PC-9 (cell line): ENCODE measurements at regions of chr7 and their contacts with region 1.

Region 1: DNA sequence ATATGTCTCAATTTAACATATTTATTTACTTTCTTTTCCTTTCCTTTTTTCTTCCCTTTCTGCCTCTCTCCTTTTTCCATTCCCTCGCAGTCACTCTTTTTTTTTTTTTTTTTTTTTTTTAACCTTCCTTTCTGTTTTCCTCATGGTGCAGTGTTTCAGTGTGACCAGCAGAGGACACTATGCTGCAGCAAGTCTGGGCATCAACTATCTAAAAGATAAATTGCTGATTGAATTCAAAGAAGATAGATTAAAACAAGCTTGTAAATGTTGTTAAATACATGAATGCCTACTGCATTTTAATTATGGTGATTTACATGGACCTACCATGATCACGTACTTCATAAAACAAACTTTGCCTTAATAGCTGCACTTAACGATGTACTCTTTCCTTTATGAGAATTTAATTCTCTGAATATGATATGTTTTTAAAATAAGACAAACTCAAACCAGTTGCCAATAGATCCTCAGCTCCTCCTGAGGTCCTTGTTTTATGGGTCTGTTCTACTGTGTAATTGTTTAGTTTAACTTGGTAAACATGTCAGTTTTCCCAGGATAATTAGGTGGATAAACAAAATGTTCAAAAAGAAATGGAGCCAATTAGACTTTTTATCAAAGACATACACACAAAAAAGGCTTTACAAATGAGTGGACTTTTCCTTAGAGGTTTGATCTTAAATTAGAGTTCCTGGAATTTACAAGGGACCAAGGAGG is 101.0 kb upstream of the AGR3 start:
- DNase-seq: peak; percentile 31 to 66
- H3K4me3 ChIP-seq: no peak overlapping the region
- H3K27ac ChIP-seq: peak overlapping the region; percentile 5; the same call in 1 of the 2 replicates
- H3K4me1 ChIP-seq: peaks cover 61% of the 10 kb centered on the region
- H3K27me3 ChIP-seq: no peaks in the 10 kb centered on the region
- CTCF ChIP-seq: peak; percentile 99

Region 2: GRCh38 chr7:16801111-16801542 is 181.7 kb before region 1 on chr7:
- CTCF ChIA-PET with region 1: interaction called, 15 read pairs
- POLR2A ChIA-PET with region 1: no interaction called
- intact Hi-C with region 1: loop called (anchors 1 kb)
- DNase-seq: peak; percentile 15 to 79
- H3K4me3 ChIP-seq: no peak overlapping the region
- H3K27ac ChIP-seq: no peak overlapping the region
- H3K4me1 ChIP-seq: peaks cover 50% of the 10 kb centered on the region
- H3K27me3 ChIP-seq: no peaks in the 10 kb centered on the region
- CTCF ChIP-seq: peak; percentile 85

Region 3: GRCh38 chr7:16918288-16918895 is 64.4 kb before region 1 on chr7:
- CTCF ChIA-PET with region 1: no interaction called
- POLR2A ChIA-PET with region 1: interaction called, 3 read pairs
- intact Hi-C with region 1: loop called (anchors 2 kb)
- DNase-seq: peak in 1 of 2 experiments; percentile 45
- H3K4me3 ChIP-seq: no peak overlapping the region
- H3K27ac ChIP-seq: no peak overlapping the region
- H3K4me1 ChIP-seq: peaks cover 86% of the 10 kb centered on the region
- H3K27me3 ChIP-seq: no peaks in the 10 kb centered on the region
- CTCF ChIP-seq: peak; percentile 96

Region 4: DNA sequence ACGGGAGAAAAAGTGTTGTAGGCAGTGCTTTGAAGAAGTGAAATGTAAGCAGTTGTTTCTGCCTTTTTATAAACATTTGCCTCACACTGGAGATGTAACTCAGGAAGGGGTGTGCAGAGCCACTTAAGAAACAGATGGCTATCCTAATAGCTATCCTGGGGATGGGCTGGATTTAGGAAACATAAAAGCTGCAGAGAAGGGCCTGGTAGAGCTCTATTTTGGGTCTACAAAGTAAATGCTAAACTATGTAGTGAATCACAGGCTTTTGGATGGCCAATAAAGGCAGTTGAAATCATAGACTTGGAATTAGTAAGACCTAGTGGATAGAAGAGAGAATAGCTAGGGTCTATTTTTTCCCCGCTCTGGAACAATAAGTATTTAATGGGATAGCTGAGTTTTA is 21.2 kb before region 1 on chr7:
- CTCF ChIA-PET with region 1: no interaction called
- POLR2A ChIA-PET with region 1: no interaction called
- intact Hi-C with region 1: no loop called
- DNase-seq: no peak
- H3K4me3 ChIP-seq: no peak overlapping the region
- H3K27ac ChIP-seq: no peak overlapping the region
- H3K4me1 ChIP-seq: no peaks in the 10 kb centered on the region
- H3K27me3 ChIP-seq: no peaks in the 10 kb centered on the region
- CTCF ChIP-seq: no peak

Region 5: DNA sequence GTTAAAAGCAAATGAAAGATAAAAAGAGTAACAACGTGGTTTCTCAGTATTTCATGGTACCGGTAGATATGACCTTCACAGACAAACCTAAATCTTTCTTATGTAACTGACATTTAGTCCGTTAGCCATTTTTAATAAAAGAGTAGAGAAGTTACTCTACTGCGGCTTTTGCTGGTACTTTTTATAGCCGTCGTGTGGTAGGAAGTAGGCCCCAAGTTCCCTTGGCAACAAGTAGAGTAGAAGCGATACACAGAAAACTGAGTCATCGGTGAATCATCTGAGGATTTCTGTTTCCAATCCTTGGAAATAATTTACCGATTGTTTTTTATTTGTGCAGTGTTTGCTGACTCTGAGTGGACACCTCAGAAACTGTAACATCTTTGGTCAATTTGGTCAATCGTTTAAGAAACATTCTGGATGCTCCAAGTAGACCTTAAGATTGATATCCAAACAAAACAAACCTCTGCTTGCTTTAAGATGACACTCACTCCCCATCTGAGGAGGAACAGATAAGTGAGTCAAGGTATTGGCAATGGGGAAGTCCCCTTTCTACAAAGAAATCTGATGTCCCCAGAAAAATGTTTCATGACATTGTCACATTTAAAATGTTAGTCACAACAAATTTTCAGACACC is 251.7 kb after region 1 on chr7:
- CTCF ChIA-PET with region 1: no interaction called
- POLR2A ChIA-PET with region 1: no interaction called
- intact Hi-C with region 1: loop called (anchors 2 kb)
- DNase-seq: peak; percentile 56 to 97
- H3K4me3 ChIP-seq: peak overlapping the region; percentile 21; the same call in 1 of the 2 replicates
- H3K27ac ChIP-seq: peak overlapping the region; percentile 67
- H3K4me1 ChIP-seq: peaks cover 32% of the 10 kb centered on the region
- H3K27me3 ChIP-seq: no peaks in the 10 kb centered on the region
- CTCF ChIP-seq: no peak

Region 6: DNA sequence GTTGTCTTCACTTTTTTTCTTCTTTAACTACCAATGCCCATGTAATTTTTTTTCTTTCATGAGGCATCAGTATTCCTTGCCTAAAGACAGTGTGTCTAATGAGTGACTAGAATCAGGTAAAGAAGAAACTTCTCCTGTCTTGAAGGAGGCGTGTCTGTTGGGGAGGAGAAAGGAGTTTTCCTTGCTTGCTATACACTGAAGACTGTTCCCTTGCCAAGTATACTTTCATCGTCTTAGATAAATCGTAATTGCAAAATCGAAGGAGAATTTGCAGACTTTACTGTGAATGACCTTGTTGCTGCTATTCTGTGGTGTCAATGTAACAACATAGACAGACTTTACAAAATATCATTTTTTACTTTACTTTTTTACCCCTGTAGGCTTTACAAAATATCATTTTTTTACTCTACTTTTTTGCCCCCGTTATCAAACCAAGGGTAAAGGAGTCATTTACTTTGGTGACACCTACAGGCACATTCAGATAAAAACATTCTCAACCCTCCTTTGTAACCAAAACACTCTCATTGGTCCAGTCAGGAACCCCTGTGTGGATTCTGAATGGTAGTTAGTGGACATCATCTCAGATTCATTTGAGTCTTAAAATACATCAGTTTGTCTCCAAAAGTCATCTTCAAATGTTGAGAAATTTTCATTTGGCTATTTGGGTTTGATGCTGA is 548.1 kb after region 1 on chr7:
- CTCF ChIA-PET with region 1: interaction called, 3 read pairs
- POLR2A ChIA-PET with region 1: no interaction called
- intact Hi-C with region 1: loop called (anchors 5 kb)
- DNase-seq: no peak
- H3K4me3 ChIP-seq: no peak overlapping the region
- H3K27ac ChIP-seq: no peak overlapping the region
- H3K4me1 ChIP-seq: peaks cover 20% of the 10 kb centered on the region
- H3K27me3 ChIP-seq: no peaks in the 10 kb centered on the region
- CTCF ChIP-seq: no peak

Region 7: DNA sequence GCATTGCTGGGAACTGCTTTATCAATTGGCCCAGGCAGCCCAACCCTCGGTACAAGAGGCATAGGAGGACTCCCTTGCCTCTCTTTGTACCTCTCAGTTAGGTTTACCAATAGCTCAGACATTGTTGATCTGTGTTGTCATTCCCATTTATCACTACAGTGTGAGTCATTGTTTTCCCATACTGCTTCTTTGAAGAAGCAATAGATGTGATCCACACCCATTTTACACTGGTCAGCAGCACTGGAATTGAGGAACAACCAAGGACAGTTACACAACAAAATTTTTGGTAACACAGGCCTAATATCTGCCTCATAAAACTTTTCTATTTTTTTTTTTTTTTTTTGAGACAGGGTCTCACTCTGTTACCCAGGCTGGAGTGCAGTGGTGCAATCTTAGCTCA is 650.3 kb after region 1 on chr7:
- CTCF ChIA-PET with region 1: no interaction called
- POLR2A ChIA-PET with region 1: no interaction called
- intact Hi-C with region 1: no loop called
- DNase-seq: peak in 1 of 2 experiments; percentile 84
- H3K4me3 ChIP-seq: no peak overlapping the region
- H3K27ac ChIP-seq: no peak overlapping the region
- H3K4me1 ChIP-seq: peaks cover 12% of the 10 kb centered on the region
- H3K27me3 ChIP-seq: no peaks in the 10 kb centered on the region
- CTCF ChIP-seq: no peak

Region 8: GRCh38 chr7:17706734-17707133 is 723.9 kb after region 1 on chr7:
- CTCF ChIA-PET with region 1: interaction called, 12 read pairs
- POLR2A ChIA-PET with region 1: no interaction called
- intact Hi-C with region 1: no loop called
- DNase-seq: peak; percentile 52 to 61
- H3K4me3 ChIP-seq: no peak overlapping the region
- H3K27ac ChIP-seq: no peak overlapping the region
- H3K4me1 ChIP-seq: no peaks in the 10 kb centered on the region
- H3K27me3 ChIP-seq: no peaks in the 10 kb centered on the region
- CTCF ChIP-seq: peak; percentile 92